GM10248 (cell line): ENCODE measurements at regions of chr4 and their contacts with region 1.

Region 1: DNA sequence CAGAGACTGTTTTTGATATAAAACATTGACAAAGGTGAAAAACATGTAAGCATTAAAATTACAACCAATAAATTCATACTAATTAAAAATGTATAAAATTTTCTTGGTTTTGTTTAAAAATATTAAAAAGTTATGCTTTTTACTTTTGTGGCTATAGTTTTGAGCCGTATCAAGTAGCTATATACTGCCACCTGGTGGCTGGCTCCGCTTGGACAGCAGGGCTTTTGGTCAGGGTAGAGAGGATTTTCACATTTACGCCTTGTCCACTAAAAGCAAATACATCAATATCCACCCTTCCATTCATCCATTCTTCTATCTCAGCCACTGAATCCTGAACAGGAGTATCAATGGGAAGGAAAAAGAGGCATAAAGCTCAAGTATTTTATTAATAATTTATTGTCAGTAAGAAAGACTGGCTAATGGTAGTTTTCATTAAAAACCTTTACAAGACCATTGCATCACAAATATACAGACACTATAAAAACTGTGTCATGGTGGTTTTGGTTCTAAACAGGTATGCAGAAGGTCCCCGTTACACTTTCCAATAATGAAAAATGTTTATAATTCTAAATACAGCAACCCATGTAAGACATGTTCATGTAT is 32.1 kb upstream of the MTNR1A start:
- DNase-seq: peak; percentile 49
- CTCF ChIP-seq: peak; percentile 88

Region 2: DNA sequence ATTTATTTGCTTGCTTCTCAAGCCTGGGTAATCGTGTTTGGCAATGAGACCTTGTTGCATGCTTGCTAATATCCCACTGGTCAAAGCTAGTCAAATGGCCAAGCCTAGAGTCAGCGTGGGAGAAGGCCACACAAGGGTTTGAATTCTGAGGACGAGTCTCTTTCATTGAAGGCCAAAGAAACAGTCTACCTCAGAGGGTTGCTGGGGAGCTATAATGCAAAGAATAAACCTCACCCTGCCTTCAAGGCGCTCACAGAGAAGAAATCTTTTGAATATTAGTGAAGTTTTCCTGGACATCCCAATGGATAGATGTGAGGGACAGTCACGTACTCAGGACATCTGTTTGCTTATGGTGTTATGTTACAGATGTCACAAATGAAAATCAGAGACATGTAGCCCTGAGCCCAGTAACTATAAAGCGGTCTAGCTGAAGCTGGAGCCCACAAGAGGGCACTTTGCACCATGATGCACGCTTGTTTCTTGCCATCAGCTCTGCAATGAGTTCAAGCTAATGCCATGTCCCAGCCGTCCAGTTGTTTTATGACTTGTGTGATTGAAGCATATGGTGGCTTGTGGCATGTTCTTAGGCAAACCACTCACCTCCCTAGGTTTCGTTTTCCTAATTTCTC is 519.6 kb before region 1 on chr4:
- CTCF ChIA-PET with region 1: interaction called, 11 read pairs
- POLR2A ChIA-PET with region 1: no interaction called
- DNase-seq: peak; percentile 38
- CTCF ChIP-seq: peak; percentile 53

Region 3: DNA sequence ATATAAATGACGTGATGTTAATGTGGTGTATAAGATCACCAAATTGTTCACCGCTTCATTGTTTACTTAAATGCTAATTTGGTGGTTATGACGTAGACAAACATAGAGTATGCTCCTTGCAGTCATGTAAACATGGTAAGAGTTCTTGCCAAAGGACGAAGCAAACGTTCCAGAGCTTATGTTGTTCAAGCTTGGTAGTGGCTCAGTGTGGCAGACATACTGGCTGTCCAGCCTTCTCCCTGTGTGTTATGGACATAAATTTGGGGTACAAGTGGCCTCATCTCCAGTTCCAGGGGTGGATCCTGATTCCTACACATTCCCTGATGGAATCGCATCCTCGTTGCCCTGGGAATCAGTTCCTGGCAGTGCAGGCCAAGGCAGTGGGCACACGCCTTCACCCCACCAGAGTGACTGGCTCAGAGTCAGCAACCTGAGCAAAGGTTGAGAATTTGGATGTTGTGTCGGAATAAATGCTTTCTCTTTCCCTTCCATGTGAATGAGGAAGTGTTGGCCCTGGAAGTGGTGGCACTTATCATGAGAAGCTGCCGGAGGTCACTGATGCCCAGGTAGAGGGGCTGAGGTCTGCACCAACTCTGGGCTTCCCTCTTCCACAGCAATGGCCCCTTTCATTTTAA is 296.1 kb before region 1 on chr4:
- CTCF ChIA-PET with region 1: interaction called, 26 read pairs
- POLR2A ChIA-PET with region 1: no interaction called
- DNase-seq: no peak
- CTCF ChIP-seq: no peak

Region 4: DNA sequence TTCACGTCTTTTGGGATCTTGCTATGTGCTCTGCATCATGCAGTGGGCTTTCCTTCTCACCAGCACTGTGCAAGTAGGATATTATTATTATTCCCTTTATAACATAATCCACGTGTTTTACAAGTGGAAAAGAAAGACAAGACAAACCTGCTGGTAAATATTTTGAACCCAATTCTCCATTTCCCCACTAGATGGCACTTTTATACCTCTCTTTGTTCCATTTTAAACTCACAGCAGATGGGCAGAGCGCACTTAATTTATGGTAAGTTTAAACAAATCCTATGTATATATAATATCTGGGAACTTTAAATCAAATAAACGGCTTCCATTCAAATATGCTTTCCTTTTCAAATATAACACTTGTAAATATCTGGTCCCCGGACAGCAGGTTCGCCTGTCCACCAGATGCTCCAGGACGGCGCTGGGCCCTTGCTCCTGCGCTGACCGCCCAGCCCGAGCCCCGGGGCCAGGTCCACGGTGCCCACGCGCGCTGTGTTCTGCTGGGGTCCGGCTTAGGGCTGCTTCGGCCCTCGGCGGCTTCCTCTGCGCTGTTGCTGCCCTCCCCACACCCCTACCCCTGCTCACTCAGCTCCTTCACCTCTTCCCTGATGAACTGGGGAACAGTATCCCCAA is 290.4 kb before region 1 on chr4:
- CTCF ChIA-PET with region 1: interaction called, 26 read pairs
- POLR2A ChIA-PET with region 1: no interaction called
- DNase-seq: peak; percentile 61
- CTCF ChIP-seq: peak; percentile 22

Region 5: GRCh38 chr4:186570193-186570996 is 17.1 kb before region 1 on chr4:
- CTCF ChIA-PET with region 1: interaction called, 10 read pairs
- POLR2A ChIA-PET with region 1: no interaction called
- DNase-seq: no peak
- CTCF ChIP-seq: no peak